B cell (primary cell): ENCODE measurements at regions of chr22 and their contacts with region 1.

Region 1: GRCh38 chr22:19479357-19480172 is at the start of gene CDC45:
- DNase-seq: peak; percentile 98
- ATAC-seq: peak; percentile 90
- H3K4me3 ChIP-seq: peak within 1 kb of the TSS; percentile 66 to 92 (median 83)
- H3K4me3 Mint-ChIP-seq: peak within 1 kb of the TSS; percentile 98
- H3K27ac ChIP-seq: peak within 1 kb of the TSS; percentile 98 to 100
- H3K27ac Mint-ChIP-seq: peak within 1 kb of the TSS; percentile 100
- H3K4me1 ChIP-seq: peaks cover 16 to 20% of the 10 kb centered on the region in 2 donors
- H3K4me1 Mint-ChIP-seq: peaks cover 23% of the 10 kb centered on the region
- H3K27me3 ChIP-seq: no peaks in the 10 kb centered on the region
- H3K27me3 Mint-ChIP-seq: no peaks in the 10 kb centered on the region
- CTCF ChIP-seq: no peak
- total RNA-seq, gene CDC45: 0.49 and 0.56 TPM in 2 replicates

Region 2: GRCh38 chr22:19122143-19122751 is 357.3 kb before region 1 on chr22 and contains the start of gene DGCR2:
- CTCF ChIA-PET with region 1: no interaction called
- POLR2A ChIA-PET with region 1: interaction called, 3 read pairs
- intact Hi-C with region 1: loop called (anchors 1 kb)
- DNase-seq: peak; percentile 97
- ATAC-seq: peak; percentile 97
- H3K4me3 ChIP-seq: peak within 1 kb of the TSS; percentile 67 to 93 (median 83)
- H3K4me3 Mint-ChIP-seq: peak within 1 kb of the TSS; percentile 94
- H3K27ac ChIP-seq: peak within 1 kb of the TSS; percentile 63 to 76
- H3K27ac Mint-ChIP-seq: peak within 1 kb of the TSS; percentile 88
- H3K4me1 ChIP-seq: peaks cover 46 to 49% of the 10 kb centered on the region in 2 donors
- H3K4me1 Mint-ChIP-seq: peaks cover 45% of the 10 kb centered on the region
- H3K27me3 ChIP-seq: no peaks in the 10 kb centered on the region
- H3K27me3 Mint-ChIP-seq: no peaks in the 10 kb centered on the region
- CTCF ChIP-seq: no peak
- total RNA-seq, gene DGCR2: 49.5 and 50.4 TPM in 2 replicates

Region 3: GRCh38 chr22:19178656-19179496 is 300.7 kb before region 1 on chr22 and contains the start of gene SLC25A1:
- CTCF ChIA-PET with region 1: interaction called, 19 read pairs
- POLR2A ChIA-PET with region 1: interaction called, 8 read pairs
- intact Hi-C with region 1: loop called (anchors 1 kb)
- DNase-seq: peak; percentile 86
- ATAC-seq: peak; percentile 80
- H3K4me3 ChIP-seq: peak within 1 kb of the TSS; percentile 18 to 76 (median 66)
- H3K4me3 Mint-ChIP-seq: peak within 1 kb of the TSS; percentile 87
- H3K27ac ChIP-seq: peak within 1 kb of the TSS in 1 of 2 donors; percentile 58
- H3K27ac Mint-ChIP-seq: peak within 1 kb of the TSS; percentile 89
- H3K4me1 ChIP-seq: peaks cover 20 to 40% of the 10 kb centered on the region in 2 donors
- H3K4me1 Mint-ChIP-seq: peaks cover 35% of the 10 kb centered on the region
- H3K27me3 ChIP-seq: no peaks in the 10 kb centered on the region
- H3K27me3 Mint-ChIP-seq: no peaks in the 10 kb centered on the region
- CTCF ChIP-seq: no peak
- total RNA-seq, gene SLC25A1: 47.7 and 48.4 TPM in 2 replicates

Region 4: GRCh38 chr22:19291580-19292457 is 187.7 kb before region 1 on chr22 and contains the start of gene CLTCL1:
- CTCF ChIA-PET with region 1: interaction called, 3 read pairs
- POLR2A ChIA-PET with region 1: interaction called, 10 read pairs
- intact Hi-C with region 1: loop called (anchors 1 kb)
- DNase-seq: peak; percentile 87
- ATAC-seq: peak; percentile 83
- H3K4me3 ChIP-seq: peak within 1 kb of the TSS; percentile 64 to 88 (median 84)
- H3K4me3 Mint-ChIP-seq: peak within 1 kb of the TSS; percentile 97
- H3K27ac ChIP-seq: peak within 1 kb of the TSS; percentile 75 to 77
- H3K27ac Mint-ChIP-seq: peak within 1 kb of the TSS; percentile 94
- H3K4me1 ChIP-seq: peaks cover 15 to 17% of the 10 kb centered on the region in 2 donors
- H3K4me1 Mint-ChIP-seq: peaks cover 24% of the 10 kb centered on the region
- H3K27me3 ChIP-seq: peaks cover 0 to 13% (median 3%) of the 10 kb centered on the region in 4 experiments
- H3K27me3 Mint-ChIP-seq: peaks cover 18% of the 10 kb centered on the region
- CTCF ChIP-seq: no peak
- total RNA-seq, gene CLTCL1: 5.2 and 5.5 TPM in 2 replicates

Region 5: DNA sequence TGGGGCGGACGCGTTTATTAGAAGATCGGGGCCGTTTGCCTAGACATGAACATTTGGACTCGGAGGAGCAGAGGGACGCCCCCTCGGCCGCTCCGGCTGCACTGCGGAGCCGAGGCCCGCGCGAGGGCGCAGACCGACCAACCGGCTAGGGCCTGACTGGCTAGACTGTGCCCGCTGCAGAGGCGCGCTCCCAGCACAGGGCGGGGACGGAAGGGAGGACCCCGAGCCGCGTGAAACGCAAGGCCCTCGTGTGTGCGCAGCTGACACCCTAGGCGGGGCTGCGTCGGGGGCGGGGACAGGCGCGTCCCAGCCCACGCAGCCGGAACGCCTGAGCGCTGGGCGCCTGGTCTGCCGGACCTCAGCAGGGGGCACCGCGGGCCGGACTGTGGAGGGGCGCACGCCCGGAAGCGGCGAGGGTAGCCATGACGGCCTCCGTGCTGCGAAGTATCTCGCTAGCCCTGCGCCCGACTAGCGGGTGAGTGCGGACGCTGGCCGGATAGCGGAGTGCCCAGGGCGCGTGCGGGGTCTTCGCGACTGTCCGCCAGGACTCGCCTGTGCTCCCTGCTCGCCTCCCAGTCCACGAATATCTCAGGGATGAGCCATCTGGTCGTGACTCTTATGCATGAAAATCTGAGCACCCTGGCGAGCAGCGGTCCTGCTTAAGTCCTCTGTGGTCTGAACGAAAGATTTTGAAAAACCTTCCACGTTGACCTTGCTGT is 47.3 kb before region 1 on chr22 and contains the start of gene MRPL40:
- CTCF ChIA-PET with region 1: interaction called, 3 read pairs
- POLR2A ChIA-PET with region 1: interaction called, 18 read pairs
- intact Hi-C with region 1: loop called (anchors 1 kb)
- DNase-seq: peak; percentile 90
- ATAC-seq: peak; percentile 87
- H3K4me3 ChIP-seq: peak within 1 kb of the TSS; percentile 73 to 90 (median 85)
- H3K4me3 Mint-ChIP-seq: peak within 1 kb of the TSS; percentile 93
- H3K27ac ChIP-seq: peak within 1 kb of the TSS; percentile 91 to 97
- H3K27ac Mint-ChIP-seq: peak within 1 kb of the TSS; percentile 98
- H3K4me1 ChIP-seq: peaks cover 46 to 63% of the 10 kb centered on the region in 2 donors
- H3K4me1 Mint-ChIP-seq: peaks cover 62% of the 10 kb centered on the region
- H3K27me3 ChIP-seq: no peaks in the 10 kb centered on the region
- H3K27me3 Mint-ChIP-seq: no peaks in the 10 kb centered on the region
- CTCF ChIP-seq: no peak
- total RNA-seq, gene MRPL40: 18.0 and 21.9 TPM in 2 replicates

Region 6: GRCh38 chr22:19619144-19620009 is 139.8 kb after region 1 on chr22:
- CTCF ChIA-PET with region 1: interaction called, 3 read pairs
- POLR2A ChIA-PET with region 1: no interaction called
- intact Hi-C with region 1: loop called (anchors 2 kb)
- DNase-seq: peak; percentile 59
- ATAC-seq: peak; percentile 31
- H3K4me3 ChIP-seq: peak overlapping the region in 1 of 5 experiments; percentile 23
- H3K4me3 Mint-ChIP-seq: peak overlapping the region; percentile 57
- H3K27ac ChIP-seq: no peak overlapping the region
- H3K27ac Mint-ChIP-seq: peak overlapping the region; percentile 28
- H3K4me1 ChIP-seq: peaks cover 35 to 59% of the 10 kb centered on the region in 2 donors
- H3K4me1 Mint-ChIP-seq: peaks cover 52% of the 10 kb centered on the region
- H3K27me3 ChIP-seq: peaks cover 0 to 22% (median 5%) of the 10 kb centered on the region in 4 experiments
- H3K27me3 Mint-ChIP-seq: peaks cover 30% of the 10 kb centered on the region
- CTCF ChIP-seq: no peak